Activated T-helper 2 cell treated with anti-CD3 and anti-CD28 coated beads, Interferon-gamma antibody, Interleukin-2, Interleukin-4, amounts not matched to agents 10 μg/mL and 5 μg/mL and 100 μg/mL, durations not matched to agents 14 hours and 24 hours and 36 hours (primary cell): ENCODE measurements at regions of chr12 and their contacts with region 1.

Region 1: DNA sequence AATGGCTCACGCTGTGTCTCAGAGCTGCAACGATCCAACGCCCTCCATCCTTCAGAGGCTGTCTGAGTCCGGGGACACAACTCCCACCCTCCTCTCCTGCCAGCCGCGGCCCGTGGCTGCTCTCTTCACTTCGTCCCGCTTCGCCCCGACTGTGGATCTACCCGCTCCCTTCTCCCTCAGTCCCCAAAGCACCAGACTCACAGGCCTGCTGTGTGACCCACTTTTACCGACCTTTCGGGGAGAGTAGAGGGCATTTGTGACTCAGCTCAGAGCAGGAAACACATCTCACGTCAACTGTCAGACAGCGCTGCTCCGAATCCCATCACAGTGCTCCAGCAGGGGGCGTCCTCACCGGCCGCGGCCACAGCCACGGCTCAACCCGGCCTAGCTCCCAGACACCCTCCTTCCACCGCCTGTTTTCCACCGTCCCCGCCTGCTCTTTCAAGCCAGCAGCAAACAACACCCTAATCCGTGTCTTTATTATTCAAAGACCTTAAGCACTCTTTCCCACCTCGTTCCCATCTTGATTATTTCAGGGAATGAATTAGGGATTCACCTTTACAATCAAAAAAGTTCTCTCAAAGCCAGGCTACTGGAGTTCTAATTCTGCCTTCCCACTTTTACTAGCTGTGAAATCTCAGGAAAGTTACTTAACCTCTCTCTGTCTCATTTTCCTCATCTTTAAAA is 5.0 kb upstream of the AQP2 start:
- DNase-seq: peak; percentile 77
- H3K4me3 Mint-ChIP-seq: peak overlapping the region; percentile 72
- H3K27ac Mint-ChIP-seq: peak overlapping the region; percentile 92
- H3K4me1 Mint-ChIP-seq: peaks cover 22% of the 10 kb centered on the region
- H3K27me3 Mint-ChIP-seq: no peaks in the 10 kb centered on the region

Region 2: GRCh38 chr12:49866859-49867579 is 78.5 kb before region 1 on chr12:
- intact Hi-C with region 1: loop called (anchors 5 kb)
- DNase-seq: peak; percentile 59
- H3K4me3 Mint-ChIP-seq: no peak overlapping the region
- H3K27ac Mint-ChIP-seq: no peak overlapping the region
- H3K4me1 Mint-ChIP-seq: no peaks in the 10 kb centered on the region
- H3K27me3 Mint-ChIP-seq: no peaks in the 10 kb centered on the region

Region 3: GRCh38 chr12:49929601-49930000 is 15.9 kb before region 1 on chr12:
- intact Hi-C with region 1: loop called (anchors 2 kb)
- DNase-seq: no peak
- H3K4me3 Mint-ChIP-seq: no peak overlapping the region
- H3K27ac Mint-ChIP-seq: no peak overlapping the region
- H3K4me1 Mint-ChIP-seq: peaks cover 2% of the 10 kb centered on the region
- H3K27me3 Mint-ChIP-seq: peaks cover 5% of the 10 kb centered on the region

Region 4: GRCh38 chr12:49962922-49963765 is 17.6 kb after region 1 on chr12:
- intact Hi-C with region 1: no loop called
- DNase-seq: no peak
- H3K4me3 Mint-ChIP-seq: no peak overlapping the region
- H3K27ac Mint-ChIP-seq: no peak overlapping the region
- H3K4me1 Mint-ChIP-seq: peaks cover 13% of the 10 kb centered on the region
- H3K27me3 Mint-ChIP-seq: peaks cover 57% of the 10 kb centered on the region

Region 5: DNA sequence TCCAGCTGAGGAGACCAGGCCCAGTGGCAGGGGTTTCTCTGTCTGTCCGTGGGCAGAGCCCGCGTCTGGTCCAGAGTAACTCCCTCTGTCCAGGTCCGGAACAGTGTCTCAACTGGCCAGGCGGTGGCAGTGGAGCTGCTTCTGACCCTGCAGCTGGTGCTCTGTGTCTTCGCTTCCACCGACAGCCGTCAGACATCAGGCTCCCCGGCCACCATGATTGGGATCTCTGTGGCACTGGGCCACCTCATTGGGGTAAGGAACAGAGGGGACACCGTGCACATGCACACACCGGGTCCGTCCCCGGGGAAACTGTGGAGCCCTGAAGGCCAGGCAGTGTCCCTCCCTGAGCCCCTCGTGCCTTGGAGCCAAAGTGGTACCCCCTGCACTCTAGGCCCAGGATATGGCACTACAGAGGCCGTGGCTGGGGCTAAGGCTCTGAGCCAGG is 28.7 kb after region 1 on chr12:
- intact Hi-C with region 1: no loop called
- DNase-seq: no peak
- H3K4me3 Mint-ChIP-seq: no peak overlapping the region
- H3K27ac Mint-ChIP-seq: no peak overlapping the region
- H3K4me1 Mint-ChIP-seq: no peaks in the 10 kb centered on the region
- H3K27me3 Mint-ChIP-seq: no peaks in the 10 kb centered on the region